Ascending aorta (tissue), 2 donors: ENCODE measurements at regions of chr20 and their contacts with region 1.

Region 1: DNA sequence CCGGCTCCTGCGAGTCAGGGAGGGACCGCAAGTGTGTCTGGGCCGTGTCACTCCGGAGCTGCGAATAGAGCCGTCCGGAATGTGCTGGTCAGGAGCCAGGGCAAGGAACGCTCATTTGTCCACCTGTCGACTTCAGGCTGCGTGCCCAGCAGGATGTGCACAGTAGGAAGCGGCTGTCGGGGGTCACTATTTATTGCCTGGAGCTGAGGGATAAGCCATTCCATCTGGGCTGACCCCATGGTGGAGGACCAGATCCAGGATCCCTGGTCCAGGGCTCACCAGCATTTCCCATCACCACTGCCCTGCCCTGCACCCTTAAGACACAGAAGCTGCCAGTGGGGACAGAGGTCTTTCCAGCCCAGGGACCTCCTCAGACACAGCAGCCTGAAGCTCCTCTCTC is 14.7 kb downstream of the NTSR1 start:
- DNase-seq: no peak
- H3K4me3 ChIP-seq: no peak overlapping the region
- H3K27ac ChIP-seq: no peak overlapping the region
- H3K4me1 ChIP-seq: no peaks in the 10 kb centered on the region
- H3K27me3 ChIP-seq: no peaks in the 10 kb centered on the region
- CTCF ChIP-seq: no peak

Region 2: DNA sequence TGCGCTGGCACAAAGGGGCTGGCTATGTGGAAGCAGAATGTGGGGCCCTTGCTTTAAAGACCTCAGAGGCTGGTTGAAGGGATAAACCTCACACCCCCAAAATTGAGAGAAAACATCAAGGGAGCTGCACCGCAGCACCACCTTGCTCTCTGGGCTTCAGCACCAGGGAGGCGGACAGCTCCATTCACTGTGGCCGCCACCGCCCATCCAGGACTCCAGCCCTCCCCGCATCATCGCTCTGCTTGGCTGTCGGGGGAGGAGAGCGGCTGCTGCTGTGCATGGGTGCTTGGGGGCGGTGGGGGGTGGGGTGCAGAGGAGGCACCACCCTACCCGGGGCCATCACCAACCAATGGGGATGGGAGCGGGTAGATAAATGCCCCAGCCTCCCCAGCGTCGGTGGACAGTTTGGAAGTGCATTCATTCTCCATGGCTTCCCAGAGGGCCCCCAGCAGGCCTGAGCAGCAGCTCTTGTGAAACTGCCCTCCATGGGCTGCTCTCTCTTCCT is 359.0 kb after region 1 on chr20:
- intact Hi-C with region 1: no loop called
- DNase-seq: peak in 1 of 2 donors; percentile 41
- H3K4me3 ChIP-seq: no peak overlapping the region
- H3K27ac ChIP-seq: no peak overlapping the region
- H3K4me1 ChIP-seq: no peaks in the 10 kb centered on the region
- H3K27me3 ChIP-seq: no peaks in the 10 kb centered on the region
- CTCF ChIP-seq: no peak

Region 3: GRCh38 chr20:64001607-64002011 is 1278.3 kb after region 1 on chr20:
- intact Hi-C with region 1: loop called (anchors 10 kb)
- DNase-seq: no peak
- H3K4me3 ChIP-seq: no peak overlapping the region
- H3K27ac ChIP-seq: no peak overlapping the region
- H3K4me1 ChIP-seq: no peaks in the 10 kb centered on the region
- H3K27me3 ChIP-seq: no peaks in the 10 kb centered on the region
- CTCF ChIP-seq: no peak